MCF 10A (cell line): ENCODE measurements at regions of chr6 and their contacts with region 1.

Region 1: DNA sequence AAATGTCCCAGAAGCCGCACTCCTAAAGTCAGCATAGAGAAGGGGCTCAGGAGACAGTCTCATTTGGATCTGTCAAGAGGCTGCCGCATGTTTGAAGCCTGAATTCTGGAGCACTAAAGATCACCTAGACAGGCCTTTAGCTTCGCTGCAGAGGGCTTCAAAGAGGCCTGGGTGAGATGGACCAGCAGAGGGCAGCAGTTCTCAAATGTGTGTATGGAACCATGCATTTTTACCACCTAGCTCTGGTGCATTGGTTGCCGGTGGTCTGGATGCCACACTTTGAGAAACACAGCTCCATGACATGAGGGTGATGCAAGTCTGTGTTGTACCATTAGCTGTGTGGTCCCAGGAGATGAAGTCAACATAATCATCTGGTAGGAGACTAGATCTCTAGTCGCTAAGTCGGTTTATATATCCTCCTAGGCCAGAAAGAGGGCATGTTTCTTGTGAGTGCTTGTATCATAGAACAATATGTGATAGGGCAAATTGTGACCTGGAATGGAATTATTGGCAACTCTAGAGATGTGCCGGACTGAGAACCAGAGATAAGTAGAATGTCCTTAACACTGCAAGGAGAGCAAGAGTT is 64.8 kb downstream of the KIAA0319 start:
- DNase-seq: peak; percentile 79
- H3K4me3 Mint-ChIP-seq: no peak overlapping the region
- H3K27ac Mint-ChIP-seq: no peak overlapping the region
- H3K4me1 Mint-ChIP-seq: peaks cover 10% of the 10 kb centered on the region
- H3K27me3 Mint-ChIP-seq: peaks cover under 1% of the 10 kb centered on the region
- CTCF ChIP-seq: peak; percentile 62

Region 2: GRCh38 chr6:24520929-24521546 is 60.1 kb before region 1 on chr6:
- CTCF ChIA-PET with region 1: interaction called, 12 read pairs
- POLR2A ChIA-PET with region 1: no interaction called
- intact Hi-C with region 1: loop called (anchors 1 kb)
- DNase-seq: peak; percentile 63
- H3K4me3 Mint-ChIP-seq: no peak overlapping the region
- H3K27ac Mint-ChIP-seq: no peak overlapping the region
- H3K4me1 Mint-ChIP-seq: peaks cover 9% of the 10 kb centered on the region
- H3K27me3 Mint-ChIP-seq: no peaks in the 10 kb centered on the region
- CTCF ChIP-seq: peak; percentile 55

Region 3: DNA sequence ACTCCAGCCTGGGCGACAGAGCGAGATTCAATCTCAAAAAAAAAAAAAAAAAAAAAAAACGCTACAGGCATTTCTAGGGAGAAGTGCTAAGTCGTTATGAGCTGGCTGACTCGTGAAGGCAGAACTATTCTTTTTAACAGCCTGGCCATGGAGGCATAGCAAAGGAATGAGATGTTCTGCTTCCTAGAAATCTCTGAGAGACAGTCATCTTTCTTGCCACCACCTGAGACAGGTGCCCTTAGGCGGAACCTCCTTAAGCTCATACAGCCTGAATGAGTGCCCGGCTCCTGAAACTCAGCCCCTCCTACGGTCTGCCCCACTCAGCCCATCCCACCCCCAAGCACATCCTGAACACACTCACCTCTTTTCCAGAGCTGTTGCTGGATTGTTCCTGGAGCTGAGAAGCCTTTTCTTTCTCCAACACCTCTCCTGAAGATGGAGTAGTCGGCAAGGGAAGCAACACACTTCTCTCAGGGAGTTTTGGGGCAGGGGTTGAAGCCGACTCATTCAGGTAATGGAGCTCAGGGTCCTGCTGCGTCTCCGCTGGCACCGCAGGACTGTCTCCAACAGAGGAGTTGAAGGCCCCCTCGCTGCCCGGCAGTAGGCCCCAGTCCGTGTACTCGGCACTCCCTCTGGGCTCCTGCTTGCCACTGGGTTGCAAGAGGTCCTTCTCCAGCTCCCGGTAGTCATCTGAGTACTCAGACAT is 14.5 kb after region 1 on chr6:
- CTCF ChIA-PET with region 1: interaction called, 16 read pairs
- POLR2A ChIA-PET with region 1: no interaction called
- intact Hi-C with region 1: no loop called
- DNase-seq: no peak
- H3K4me3 Mint-ChIP-seq: no peak overlapping the region
- H3K27ac Mint-ChIP-seq: no peak overlapping the region
- H3K4me1 Mint-ChIP-seq: no peaks in the 10 kb centered on the region
- H3K27me3 Mint-ChIP-seq: no peaks in the 10 kb centered on the region
- CTCF ChIP-seq: no peak

Region 4: GRCh38 chr6:24666641-24667377 is 85.6 kb after region 1 on chr6 and contains the starts of genes ACOT13 and TDP2:
- CTCF ChIA-PET with region 1: interaction called, 36 read pairs
- POLR2A ChIA-PET with region 1: interaction called, 5 read pairs
- intact Hi-C with region 1: loop called (anchors 1 kb)
- DNase-seq: peak; percentile 97
- H3K4me3 Mint-ChIP-seq: peak within 1 kb of the TSS; percentile 94
- H3K27ac Mint-ChIP-seq: peak within 1 kb of the TSS; percentile 96
- H3K4me1 Mint-ChIP-seq: peaks cover 15% of the 10 kb centered on the region
- H3K27me3 Mint-ChIP-seq: no peaks in the 10 kb centered on the region
- CTCF ChIP-seq: peak; percentile 43
- total RNA-seq, gene ACOT13: 29.4 and 31.4 TPM in 2 replicates
- total RNA-seq, gene TDP2: 27.6 and 28.2 TPM in 2 replicates

Region 5: DNA sequence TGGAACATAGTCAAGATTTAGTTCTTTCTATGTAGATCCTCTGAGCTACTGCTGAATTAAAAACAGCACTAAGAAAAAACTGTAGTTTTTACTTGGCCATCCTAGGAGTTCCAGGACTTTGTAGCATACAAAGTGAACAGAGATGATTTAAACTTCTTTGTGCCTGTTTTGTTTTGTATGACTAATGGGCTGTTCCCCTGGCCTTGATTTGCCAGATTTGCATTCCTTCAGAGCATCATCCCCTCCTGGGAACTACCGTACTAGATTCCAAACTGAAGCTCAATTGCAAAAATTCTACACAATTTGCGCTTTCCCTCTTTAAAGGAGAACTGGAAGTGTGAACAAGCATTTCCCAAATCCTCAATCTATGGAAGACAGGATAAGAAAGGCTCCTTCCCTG is 108.8 kb after region 1 on chr6:
- CTCF ChIA-PET with region 1: interaction called, 33 read pairs
- POLR2A ChIA-PET with region 1: no interaction called
- intact Hi-C with region 1: loop called (anchors 1 kb)
- DNase-seq: no peak
- H3K4me3 Mint-ChIP-seq: no peak overlapping the region
- H3K27ac Mint-ChIP-seq: no peak overlapping the region
- H3K4me1 Mint-ChIP-seq: peaks cover 6% of the 10 kb centered on the region
- H3K27me3 Mint-ChIP-seq: no peaks in the 10 kb centered on the region
- CTCF ChIP-seq: no peak

Region 6: GRCh38 chr6:24766680-24767462 is 185.7 kb after region 1 on chr6:
- CTCF ChIA-PET with region 1: interaction called, 9 read pairs
- POLR2A ChIA-PET with region 1: interaction called, 4 read pairs
- intact Hi-C with region 1: loop called (anchors 1 kb)
- DNase-seq: peak; percentile 45
- H3K4me3 Mint-ChIP-seq: no peak overlapping the region
- H3K27ac Mint-ChIP-seq: no peak overlapping the region
- H3K4me1 Mint-ChIP-seq: peaks cover 11% of the 10 kb centered on the region
- H3K27me3 Mint-ChIP-seq: no peaks in the 10 kb centered on the region
- CTCF ChIP-seq: peak; percentile 58

Region 7: GRCh38 chr6:25070547-25071366 is 489.6 kb after region 1 on chr6:
- CTCF ChIA-PET with region 1: interaction called, 3 read pairs
- POLR2A ChIA-PET with region 1: no interaction called
- intact Hi-C with region 1: loop called (anchors 2 kb)
- DNase-seq: peak; percentile 86
- H3K4me3 Mint-ChIP-seq: no peak overlapping the region
- H3K27ac Mint-ChIP-seq: no peak overlapping the region
- H3K4me1 Mint-ChIP-seq: no peaks in the 10 kb centered on the region
- H3K27me3 Mint-ChIP-seq: no peaks in the 10 kb centered on the region
- CTCF ChIP-seq: peak; percentile 91